ENCODE measurements at regions of chr2 and their contacts with region 1.

Region 1: DNA sequence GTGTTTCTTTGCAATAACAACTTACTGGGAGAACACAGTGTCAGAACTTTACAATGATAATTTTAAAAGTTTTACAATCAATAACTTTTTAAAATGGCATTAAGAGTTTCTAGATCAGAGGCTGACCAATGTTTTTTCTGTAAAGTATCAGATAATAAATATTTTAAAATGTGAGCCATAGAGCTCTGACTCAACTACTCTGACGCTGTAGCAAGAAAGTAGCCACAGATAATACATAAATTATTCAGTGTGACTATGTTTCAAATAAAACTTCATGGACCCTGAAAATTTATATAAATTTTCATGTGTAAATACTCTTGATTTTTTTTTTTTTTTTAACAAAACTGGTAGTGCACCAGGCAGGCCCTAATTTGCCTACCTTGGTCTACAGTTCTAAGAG is 77.4 kb downstream of the CUL3 start:
- DNase-seq: no peak
- ATAC-seq: no peak
- H3K4me3 ChIP-seq: no peak overlapping the region
- H3K4me3 Mint-ChIP-seq: no peak overlapping the region
- H3K27ac ChIP-seq: no peak overlapping the region
- H3K27ac Mint-ChIP-seq: no peak overlapping the region
- H3K4me1 ChIP-seq: no peaks in the 10 kb centered on the region
- H3K4me1 Mint-ChIP-seq: peaks cover 6 to 18% (median 13%) of the 10 kb centered on the region in 7 donors
- H3K27me3 ChIP-seq: no peaks in the 10 kb centered on the region
- H3K27me3 Mint-ChIP-seq: no peaks in the 10 kb centered on the region

Region 2: DNA sequence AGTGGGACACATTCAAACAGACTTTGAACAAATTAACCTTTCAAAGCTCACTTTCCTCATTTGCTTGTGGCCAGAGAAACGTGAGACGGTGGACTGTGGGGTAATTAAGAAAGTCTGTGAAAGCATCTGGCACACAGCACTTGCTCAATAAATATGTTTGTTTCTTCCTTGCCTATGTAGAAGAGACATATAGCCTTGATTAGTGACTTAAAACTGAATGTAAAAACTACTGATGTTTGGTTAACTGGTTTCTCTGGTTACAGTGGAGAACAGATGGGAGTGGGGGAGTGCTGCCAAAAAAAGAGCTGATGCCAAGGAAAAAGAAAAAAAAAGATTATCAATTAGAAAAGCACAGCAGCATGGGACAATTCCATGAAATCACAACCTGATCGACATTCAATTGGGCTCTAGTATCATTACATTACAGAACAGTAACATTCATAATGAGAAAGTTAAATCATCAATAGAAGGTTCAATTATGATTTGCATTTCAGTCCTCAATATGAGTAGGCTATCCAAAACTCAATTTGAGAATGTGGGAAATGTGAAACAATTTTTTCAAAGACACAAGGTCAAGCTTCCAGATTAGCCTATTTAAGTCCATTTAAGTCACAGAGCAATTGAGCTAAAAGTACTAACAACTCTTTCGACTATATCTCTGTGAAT is 62.7 kb after region 1 on chr2:
- CTCF ChIA-PET with region 1: interaction called, 3 read pairs
- POLR2A ChIA-PET with region 1: no interaction called
- intact Hi-C with region 1: loop called in 1 of 2 experiments (anchors 5 kb)
- DNase-seq: no peak
- ATAC-seq: no peak
- H3K4me3 ChIP-seq: no peak overlapping the region
- H3K4me3 Mint-ChIP-seq: peak overlapping the region in 9 of 10 donors; percentile 1 to 84 (median 42)
- H3K27ac ChIP-seq: no peak overlapping the region
- H3K27ac Mint-ChIP-seq: peak overlapping the region in 1 of 9 donors; percentile 34
- H3K4me1 ChIP-seq: peaks cover 38 to 49% of the 10 kb centered on the region in 2 donors
- H3K4me1 Mint-ChIP-seq: peaks cover 52 to 95% (median 75%) of the 10 kb centered on the region in 7 donors
- H3K27me3 ChIP-seq: no peaks in the 10 kb centered on the region
- H3K27me3 Mint-ChIP-seq: no peaks in the 10 kb centered on the region

Measured in naive thymus-derived CD4-positive, alpha-beta T cell (primary cell).